ENCODE measurements at regions of chr20 and their contacts with region 1.

Region 1: DNA sequence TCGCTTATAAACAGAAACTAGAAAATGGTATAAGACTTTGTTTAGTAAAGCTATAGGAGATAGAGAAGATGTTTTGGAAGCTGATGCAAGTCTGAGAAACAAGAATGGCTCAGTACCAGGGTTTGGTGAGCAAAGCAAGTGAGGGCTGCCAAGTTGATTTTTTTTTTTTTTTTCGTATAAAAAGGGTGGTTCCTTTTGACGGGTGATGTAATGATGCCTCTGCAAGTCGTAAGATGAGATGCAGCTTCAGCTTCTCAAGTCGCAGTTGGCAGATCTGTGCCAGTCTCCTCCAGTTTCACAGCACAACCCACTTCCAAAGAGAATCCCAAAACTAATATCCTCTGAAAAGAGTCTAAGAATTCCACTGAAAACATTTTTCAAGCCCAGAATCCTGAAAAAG is 252.8 kb upstream of the CDH4 start:
- DNase-seq: no peak
- ATAC-seq: no peak
- H3K4me3 ChIP-seq: no peak overlapping the region
- H3K27ac ChIP-seq: peak overlapping the region in 1 of 2 experiments; percentile 54; a peak in 1 of 6 replicates
- H3K4me1 ChIP-seq: no peaks in the 10 kb centered on the region; the same call in 2 of the 3 replicates
- CTCF ChIP-seq: no peak
- EP300 ChIP-seq: no peak
- POLR2A ChIP-seq: no peak
- RAD21 ChIP-seq: no peak

Region 2: DNA sequence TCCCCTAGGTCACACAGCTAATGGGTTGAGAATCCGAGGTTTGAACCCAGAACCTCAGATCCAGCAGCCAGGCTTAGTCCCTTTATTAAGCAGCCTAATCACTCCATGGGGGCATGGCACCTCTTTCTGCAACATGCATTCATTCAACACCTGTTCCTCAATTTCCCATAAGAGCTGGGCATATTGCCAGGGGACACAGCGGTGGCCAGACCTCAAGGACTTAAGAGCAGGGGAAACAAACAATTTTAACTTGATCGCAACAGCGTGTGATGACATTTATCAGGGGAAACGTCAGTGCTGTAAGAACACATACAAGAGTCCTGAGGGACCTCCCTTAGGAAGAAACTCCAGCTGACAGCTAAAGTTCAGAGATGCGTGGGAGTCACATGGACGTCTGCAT is 14.6 kb before region 1 on chr20:
- CTCF ChIA-PET with region 1: interaction called, 11 read pairs
- POLR2A ChIA-PET with region 1: no interaction called
- DNase-seq: no peak
- ATAC-seq: no peak
- H3K4me3 ChIP-seq: no peak overlapping the region
- H3K27ac ChIP-seq: no peak overlapping the region
- H3K4me1 ChIP-seq: no peaks in the 10 kb centered on the region
- CTCF ChIP-seq: no peak
- EP300 ChIP-seq: no peak
- POLR2A ChIP-seq: no peak
- RAD21 ChIP-seq: no peak

Measured in A549 (cell line).